ENCODE measurements at regions of chr3 and their contacts with region 1.

Region 1: DNA sequence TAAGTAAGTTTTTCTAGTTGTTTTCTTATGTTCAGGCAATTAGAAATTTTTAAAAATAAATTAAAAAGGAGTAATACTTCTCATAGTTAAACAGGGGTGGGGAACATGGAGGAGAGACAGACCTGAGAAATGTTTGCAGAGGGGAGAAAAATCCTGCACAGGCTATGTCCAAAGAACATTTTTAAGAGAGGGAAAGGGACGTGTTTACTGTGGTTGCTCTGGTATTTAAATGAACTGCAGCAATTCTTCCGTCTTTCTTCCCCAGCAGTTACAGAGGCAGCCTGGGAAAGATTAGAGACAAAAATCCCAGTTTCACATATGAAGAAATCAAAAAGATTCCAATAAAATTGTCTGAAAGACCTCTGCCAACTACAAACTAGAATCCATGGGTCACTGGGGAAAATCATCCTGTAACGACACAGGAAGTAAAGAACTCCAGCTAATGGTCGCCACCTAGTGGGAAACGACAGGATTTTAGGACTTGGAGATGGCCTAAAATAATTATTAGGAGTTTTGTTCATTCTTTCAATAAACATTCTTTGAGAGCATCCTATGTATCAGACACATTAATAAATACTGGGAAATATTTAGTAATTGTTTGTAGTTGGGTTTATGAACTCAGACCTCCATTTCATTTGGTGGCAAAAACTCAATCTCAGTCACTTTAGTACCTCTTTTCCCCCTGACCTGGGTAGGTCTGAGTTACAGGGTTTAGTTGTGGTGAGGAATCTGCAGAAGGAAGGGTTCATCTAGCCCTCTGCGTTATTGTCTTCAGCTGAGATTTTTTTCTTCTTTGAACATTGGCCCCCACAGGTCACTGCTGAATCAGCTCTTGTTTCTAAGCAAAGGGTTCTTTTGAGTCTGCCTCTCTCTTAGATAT is 69.9 kb upstream of the GOLIM4 start:
- DNase-seq: peak in 1 of 2 donors; percentile 70
- ATAC-seq: peak in 7 of 8 donors; percentile 71 to 87 (median 77)
- H3K4me3 ChIP-seq: peak overlapping the region in 4 of 10 donors; percentile 15 to 34 (median 26)
- H3K27ac ChIP-seq: peak overlapping the region in 4 of 10 donors; percentile 16 to 52 (median 44)
- H3K4me1 ChIP-seq: peaks cover 0 to 5% (median 0%) of the 10 kb centered on the region in 9 donors
- H3K27me3 ChIP-seq: no peaks in the 10 kb centered on the region
- CTCF ChIP-seq: peak; percentile 56 to 93 (median 81)

Region 2: DNA sequence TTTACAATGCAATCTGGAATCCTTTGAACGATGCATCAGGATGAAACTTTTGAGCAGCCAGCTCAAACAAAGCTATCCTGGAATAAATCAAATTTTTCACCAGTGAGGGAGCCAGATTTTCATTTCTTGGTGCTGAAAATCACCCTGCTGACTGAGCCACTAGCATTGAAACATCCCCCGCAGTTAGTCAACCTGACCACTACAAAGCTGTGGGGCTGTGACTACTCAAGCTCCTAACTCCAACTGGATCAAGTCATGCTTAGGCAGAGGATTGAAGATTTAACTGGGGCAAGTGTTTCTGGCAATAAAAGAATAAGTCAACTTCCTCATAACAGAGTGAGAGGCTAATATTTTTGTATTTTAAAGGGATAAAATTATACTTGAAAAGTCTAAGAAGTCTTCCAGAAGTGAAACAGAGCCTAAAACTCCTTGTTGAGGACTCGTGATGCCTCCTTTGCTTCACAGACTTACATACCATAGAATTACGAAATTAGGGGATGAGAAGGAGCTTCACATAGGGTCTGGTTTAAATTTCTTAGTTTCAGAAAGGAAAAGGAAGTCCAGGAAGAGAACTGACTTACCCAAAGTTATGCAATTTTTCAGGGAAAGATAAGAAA is 252.3 kb before region 1 on chr3:
- intact Hi-C with region 1: loop called in 1 of 10 experiments (anchors 10 kb)
- DNase-seq: no peak
- ATAC-seq: peak in 3 of 8 donors; percentile 38 to 68 (median 54)
- H3K4me3 ChIP-seq: no peak overlapping the region
- H3K27ac ChIP-seq: peak overlapping the region in 2 of 10 donors; percentile 15 to 19
- H3K4me1 ChIP-seq: peaks cover 0 to 7% (median 0%) of the 10 kb centered on the region in 9 donors
- H3K27me3 ChIP-seq: no peaks in the 10 kb centered on the region
- CTCF ChIP-seq: peak in 1 of 9 donors; percentile 13

Region 3: GRCh38 chr3:168040607-168041208 is 124.9 kb before region 1 on chr3:
- intact Hi-C with region 1: loop called in 1 of 10 experiments (anchors 5 kb)
- DNase-seq: no peak
- ATAC-seq: peak; percentile 42 to 79 (median 70)
- H3K4me3 ChIP-seq: no peak overlapping the region
- H3K27ac ChIP-seq: no peak overlapping the region
- H3K4me1 ChIP-seq: peaks cover 0 to 37% (median 17%) of the 10 kb centered on the region in 9 donors
- H3K27me3 ChIP-seq: no peaks in the 10 kb centered on the region
- CTCF ChIP-seq: peak; percentile 22 to 75 (median 70)

Region 4: DNA sequence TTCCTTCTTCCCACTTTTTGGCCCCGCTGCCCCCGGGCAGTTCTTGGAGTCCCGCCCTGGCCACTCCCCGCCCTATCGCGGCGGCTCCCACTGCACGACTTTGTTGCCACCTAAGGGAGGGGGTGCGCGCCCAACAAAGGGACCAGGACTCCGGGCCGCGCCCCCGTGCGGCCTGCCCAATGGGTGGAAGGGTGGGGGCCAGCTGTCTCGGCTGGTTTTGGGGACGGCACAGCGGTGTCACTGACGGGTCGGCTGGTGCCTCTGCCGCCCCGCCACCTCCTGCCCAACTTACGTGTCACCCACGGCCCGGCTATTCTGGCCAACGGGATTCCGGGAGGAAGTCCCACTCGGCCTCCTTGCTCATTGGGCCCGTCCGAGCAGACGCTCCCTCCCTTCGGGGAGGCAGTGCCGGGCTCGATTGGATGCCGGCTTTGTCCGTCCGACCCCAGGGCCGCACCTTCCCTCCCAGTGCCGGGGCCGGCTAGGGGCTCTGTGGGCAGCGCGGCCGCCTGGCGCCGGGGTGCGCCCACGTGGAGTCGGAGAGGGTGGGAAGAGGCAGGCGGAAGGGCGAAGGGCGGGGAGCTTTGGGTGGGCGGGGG is 69.9 kb before region 1 on chr3 and contains the start of gene GOLIM4:
- intact Hi-C with region 1: loop called in 3 of 10 experiments (anchors 2 to 5 kb)
- DNase-seq: peak; percentile 96
- ATAC-seq: peak; percentile 94 to 98 (median 96)
- H3K4me3 ChIP-seq: peak within 1 kb of the TSS; percentile 65 to 99 (median 79)
- H3K27ac ChIP-seq: peak within 1 kb of the TSS; percentile 80 to 99 (median 96)
- H3K4me1 ChIP-seq: peaks cover 4 to 50% (median 42%) of the 10 kb centered on the region in 9 donors
- H3K27me3 ChIP-seq: no peaks in the 10 kb centered on the region
- CTCF ChIP-seq: peak in 3 of 9 donors; percentile 18 to 47 (median 42)
- total RNA-seq, gene GOLIM4: 56.6 to 103 (median 77.3) TPM

Region 5: GRCh38 chr3:168116279-168116678 is 49.4 kb before region 1 on chr3:
- intact Hi-C with region 1: loop called in 2 of 10 experiments (anchors 5 kb)
- DNase-seq: peak; percentile 24 to 70
- ATAC-seq: peak; percentile 50 to 95 (median 88)
- H3K4me3 ChIP-seq: no peak overlapping the region
- H3K27ac ChIP-seq: peak overlapping the region in 2 of 10 donors; percentile 19 to 34
- H3K4me1 ChIP-seq: peaks cover 0 to 39% (median 17%) of the 10 kb centered on the region in 9 donors
- H3K27me3 ChIP-seq: no peaks in the 10 kb centered on the region
- CTCF ChIP-seq: no peak